ENCODE measurements at regions of chr20 and their contacts with region 1.

Region 1: DNA sequence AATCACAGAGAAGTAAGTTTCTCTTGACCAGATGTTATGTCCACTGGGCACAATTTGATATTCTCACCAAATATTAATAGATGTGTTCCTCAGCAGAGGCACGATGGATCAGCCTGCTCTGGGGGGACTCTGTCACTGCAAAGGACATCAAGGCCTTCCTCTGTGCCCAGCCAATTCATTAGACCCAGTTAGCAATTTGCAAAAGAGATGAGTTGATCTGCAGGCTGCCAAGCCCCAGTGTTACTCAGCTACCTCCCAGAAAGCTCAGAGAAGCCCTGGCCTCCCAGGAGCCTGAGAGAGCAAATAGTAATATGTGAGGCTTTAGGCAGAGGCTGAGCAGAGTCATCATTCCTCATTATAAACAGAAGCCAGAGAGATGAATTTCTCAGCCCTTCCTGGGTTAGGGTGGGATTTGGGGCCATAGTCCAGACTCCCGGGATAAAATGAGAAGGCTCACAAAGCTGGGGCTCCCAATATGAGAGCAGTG is 54.2 kb downstream of the ZNF831 start:
- DNase-seq: no peak
- H3K4me3 ChIP-seq: no peak overlapping the region
- CTCF ChIP-seq: no peak

Region 2: DNA sequence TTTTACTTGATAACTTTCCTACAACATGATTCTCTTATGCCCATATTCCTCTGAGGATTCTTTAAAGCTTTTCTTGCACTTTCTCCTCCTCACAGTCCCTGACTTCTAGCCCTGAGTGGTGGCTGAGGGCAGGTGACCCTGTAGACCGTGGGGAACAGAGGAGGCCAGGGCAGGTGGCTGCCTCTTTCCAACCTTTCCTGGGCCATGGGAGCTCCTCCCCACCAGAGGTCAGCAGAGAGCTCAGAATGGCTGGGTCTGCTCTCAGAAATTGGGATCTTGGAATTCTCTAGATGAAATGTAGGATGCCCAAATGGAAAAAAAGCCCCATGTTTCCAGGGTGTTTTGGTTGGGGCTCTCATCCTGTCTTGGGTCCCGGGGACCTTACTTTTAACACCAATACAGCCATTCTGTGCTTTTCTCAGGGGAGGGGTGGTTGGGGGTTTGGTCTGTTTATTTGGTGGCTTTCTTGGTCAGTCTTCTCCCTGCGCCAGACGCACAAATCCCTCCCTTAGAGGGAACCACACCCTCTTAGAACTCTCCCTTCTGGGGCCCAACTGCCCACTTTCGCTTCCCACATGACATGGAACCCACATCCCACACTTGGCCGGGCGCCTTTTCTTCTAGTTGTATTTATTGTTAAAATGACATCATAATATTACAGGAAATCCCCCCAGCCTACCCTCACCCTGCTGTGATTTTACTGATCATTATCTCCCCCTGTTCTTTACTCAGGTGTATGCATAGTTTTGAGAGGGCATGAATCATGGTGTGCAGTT is 347.4 kb before region 1 on chr20:
- in situ Hi-C with region 1: loop called (anchors 5 kb)
- DNase-seq: peak; percentile 38
- H3K4me3 ChIP-seq: no peak overlapping the region
- CTCF ChIP-seq: peak; percentile 96

Region 3: GRCh38 chr20:59006864-59007664 is 210.8 kb before region 1 on chr20 and contains the start of gene CTSZ:
- in situ Hi-C with region 1: loop called (anchors 5 kb)
- DNase-seq: no peak
- H3K4me3 ChIP-seq: peak within 1 kb of the TSS; percentile 53
- CTCF ChIP-seq: no peak